AG04449 (cell line): ENCODE measurements at regions of chr20 and their contacts with region 1.

Region 1: DNA sequence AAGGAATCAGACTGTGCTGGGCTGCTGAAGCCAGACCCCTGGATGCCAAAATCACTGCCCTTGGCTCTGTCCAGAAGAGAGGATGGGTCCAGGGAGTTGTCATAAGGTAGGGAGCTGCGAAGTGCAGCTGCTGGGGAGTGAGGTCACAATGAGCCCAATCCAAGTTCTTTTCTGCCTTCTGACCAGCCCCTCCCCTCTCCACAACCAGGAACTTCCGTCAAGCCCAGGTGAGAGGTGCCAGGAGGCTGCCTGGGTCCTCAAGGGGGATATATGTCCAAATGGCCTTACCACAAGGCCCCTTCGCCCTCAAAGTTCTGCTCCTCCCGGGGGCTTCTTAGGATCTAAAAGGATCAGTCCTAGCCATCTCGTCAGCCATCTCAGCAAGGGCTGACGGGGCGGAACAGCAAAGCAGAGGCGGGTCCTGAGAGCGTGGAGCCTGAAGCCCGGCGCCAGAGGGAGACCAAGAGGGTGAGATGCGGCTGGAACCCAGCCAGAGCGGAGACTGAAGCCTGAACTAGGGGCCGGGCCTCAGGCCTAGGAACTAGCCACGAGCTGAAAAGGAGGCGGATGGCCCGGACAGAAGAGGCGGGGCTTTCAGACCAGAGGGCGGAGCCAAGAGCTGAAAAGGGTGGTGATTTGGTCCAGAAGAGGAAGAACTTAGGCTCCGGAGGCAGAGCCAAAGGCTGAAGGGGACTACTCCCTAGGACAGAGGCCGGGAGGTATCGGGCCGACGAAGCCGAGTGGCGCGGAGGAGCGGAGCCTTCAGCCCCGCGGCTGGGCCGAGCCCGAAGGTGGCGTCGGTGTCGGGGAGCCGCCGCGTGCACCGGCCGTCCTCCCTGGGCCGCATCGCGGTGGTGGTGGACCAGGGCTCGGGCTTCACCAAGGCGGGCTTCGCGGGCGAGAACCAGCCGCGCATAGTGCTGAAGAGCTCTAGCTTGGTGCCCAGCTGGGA is at the start of gene ACTL10:
- DNase-seq: peak; percentile 79
- H3K4me3 ChIP-seq: peak within 1 kb of the TSS; percentile 58
- CTCF ChIP-seq: peak; percentile 66

Region 2: DNA sequence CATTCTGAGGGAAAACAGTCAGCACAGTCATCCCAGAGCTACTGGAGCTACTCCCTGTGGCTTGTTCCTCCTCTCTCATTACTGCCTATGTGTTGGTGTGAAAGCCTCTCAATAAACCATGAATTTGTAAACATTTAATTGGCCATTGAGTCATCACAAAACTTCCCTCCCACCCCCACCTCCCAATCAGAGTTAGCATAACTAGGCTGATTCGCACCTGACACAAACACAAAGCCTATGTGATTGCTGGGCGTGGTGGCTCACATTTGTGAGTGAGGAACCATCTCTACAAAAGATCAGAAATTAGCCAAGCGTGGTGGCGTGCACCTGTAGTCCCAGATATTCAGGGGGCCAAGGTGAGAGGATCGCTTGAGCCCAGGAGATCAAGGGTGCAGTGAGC is 205.9 kb before region 1 on chr20:
- CTCF ChIA-PET with region 1: interaction called, 25 read pairs
- POLR2A ChIA-PET with region 1: no interaction called
- DNase-seq: no peak
- H3K4me3 ChIP-seq: no peak overlapping the region
- CTCF ChIP-seq: no peak

Region 3: GRCh38 chr20:33653218-33653899 is 13.2 kb before region 1 on chr20:
- CTCF ChIA-PET with region 1: interaction called, 99 read pairs
- POLR2A ChIA-PET with region 1: interaction called, 5 read pairs
- DNase-seq: no peak
- H3K4me3 ChIP-seq: no peak overlapping the region
- CTCF ChIP-seq: peak; percentile 93

Region 4: DNA sequence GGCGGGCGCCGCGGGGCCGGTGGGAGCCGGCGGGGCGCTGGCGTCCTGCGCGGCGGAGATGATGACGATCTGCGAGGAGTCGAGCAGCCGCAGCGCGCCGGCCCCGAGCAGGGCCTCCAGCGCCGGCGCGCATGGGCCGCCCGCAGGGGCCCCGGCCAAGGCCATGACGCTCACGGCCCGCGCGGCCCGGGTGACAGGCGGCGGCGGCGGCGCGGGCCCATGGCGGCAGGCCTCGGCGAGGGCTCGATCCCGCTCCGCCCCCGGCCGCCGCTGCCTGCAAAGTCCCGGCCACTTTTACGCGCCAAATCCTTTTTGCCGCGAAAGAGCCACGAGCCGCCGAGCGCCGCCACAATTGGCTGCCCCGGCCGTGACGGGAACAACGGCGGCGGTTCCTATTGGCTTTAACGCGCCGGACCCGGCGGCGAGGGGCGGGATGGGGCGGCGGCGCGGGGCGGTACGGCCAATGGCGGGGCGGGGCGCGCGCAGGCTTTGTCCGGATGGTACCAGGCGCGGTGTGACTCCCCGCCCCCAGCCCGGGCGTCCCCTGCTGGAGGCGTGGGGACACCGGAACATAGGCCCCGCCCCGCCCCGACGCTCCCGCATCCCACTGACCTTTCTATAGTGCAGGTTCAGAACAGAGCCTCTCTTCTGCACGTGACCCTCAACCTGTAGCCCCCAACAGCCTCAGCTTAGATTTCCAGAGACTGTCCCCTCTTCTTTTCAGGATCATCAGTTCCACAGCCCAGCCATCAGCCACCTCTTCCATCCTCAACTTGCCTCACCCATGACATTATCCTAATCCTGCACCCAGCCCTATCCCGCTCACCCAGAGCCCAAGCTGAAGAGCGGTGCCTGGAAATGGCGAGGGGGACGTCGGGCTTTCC is 19.8 kb after region 1 on chr20 and contains the start of gene E2F1:
- CTCF ChIA-PET with region 1: interaction called, 40 read pairs
- POLR2A ChIA-PET with region 1: interaction called, 3 read pairs
- DNase-seq: no peak
- H3K4me3 ChIP-seq: peak within 1 kb of the TSS; percentile 56
- CTCF ChIP-seq: peak; percentile 42